ENCODE measurements at regions of chr1 and their contacts with region 1.

Region 1: GRCh38 chr1:183444243-183444642 is 26.1 kb upstream of the NMNAT2 start:
- DNase-seq: no peak
- ATAC-seq: no peak
- H3K4me3 ChIP-seq: no peak overlapping the region
- H3K27ac ChIP-seq: no peak overlapping the region
- H3K4me1 ChIP-seq: no peaks in the 10 kb centered on the region
- H3K27me3 ChIP-seq: peaks cover 0 to 10% (median 0%) of the 10 kb centered on the region in 7 donors
- CTCF ChIP-seq: no peak

Region 2: GRCh38 chr1:183349201-183349711 is 95.0 kb before region 1 on chr1:
- intact Hi-C with region 1: loop called in 1 of 10 experiments (anchors 10 kb)
- DNase-seq: peak in 1 of 2 donors; percentile 20
- ATAC-seq: peak; percentile 75 to 90 (median 84)
- H3K4me3 ChIP-seq: no peak overlapping the region
- H3K27ac ChIP-seq: peak overlapping the region in 5 of 10 donors; percentile 35 to 61 (median 44)
- H3K4me1 ChIP-seq: peaks cover 0 to 18% (median 11%) of the 10 kb centered on the region in 9 donors
- H3K27me3 ChIP-seq: no peaks in the 10 kb centered on the region
- CTCF ChIP-seq: no peak

Region 3: DNA sequence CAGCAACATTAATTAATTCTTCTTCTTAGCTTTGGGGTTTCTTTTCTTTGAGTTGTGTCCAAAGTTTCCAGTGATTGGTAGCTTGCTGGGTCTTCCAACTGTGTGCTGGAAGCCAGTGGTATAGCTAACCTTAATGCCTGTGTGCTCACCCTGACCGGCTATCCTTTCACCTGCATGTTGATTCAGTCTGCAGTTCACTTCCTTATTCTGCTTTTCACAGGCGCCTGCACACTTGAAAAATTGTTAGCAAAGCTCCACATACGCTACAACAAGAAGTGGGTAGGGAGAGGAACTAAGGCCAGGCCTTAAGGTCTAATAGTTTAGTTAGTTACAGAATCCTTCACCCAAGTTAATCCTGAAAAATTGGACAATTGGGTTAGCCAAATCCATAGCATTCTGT is 110.3 kb after region 1 on chr1:
- intact Hi-C with region 1: no loop called
- DNase-seq: no peak
- ATAC-seq: no peak
- H3K4me3 ChIP-seq: no peak overlapping the region
- H3K27ac ChIP-seq: peak overlapping the region in 1 of 10 donors; percentile 5
- H3K4me1 ChIP-seq: peaks cover 0 to 11% (median 0%) of the 10 kb centered on the region in 9 donors
- H3K27me3 ChIP-seq: no peaks in the 10 kb centered on the region
- CTCF ChIP-seq: no peak

Region 4: GRCh38 chr1:183739741-183740271 is 295.6 kb after region 1 on chr1:
- intact Hi-C with region 1: no loop called
- DNase-seq: peak in 1 of 2 donors; percentile 36
- ATAC-seq: peak in 6 of 8 donors; percentile 17 to 75 (median 55)
- H3K4me3 ChIP-seq: no peak overlapping the region
- H3K27ac ChIP-seq: peak overlapping the region in 3 of 10 donors; percentile 19 to 72 (median 26)
- H3K4me1 ChIP-seq: peaks cover 3 to 43% (median 32%) of the 10 kb centered on the region in 9 donors
- H3K27me3 ChIP-seq: no peaks in the 10 kb centered on the region
- CTCF ChIP-seq: no peak